ENCODE measurements at regions of chr17 and their contacts with region 1.

Region 1: DNA sequence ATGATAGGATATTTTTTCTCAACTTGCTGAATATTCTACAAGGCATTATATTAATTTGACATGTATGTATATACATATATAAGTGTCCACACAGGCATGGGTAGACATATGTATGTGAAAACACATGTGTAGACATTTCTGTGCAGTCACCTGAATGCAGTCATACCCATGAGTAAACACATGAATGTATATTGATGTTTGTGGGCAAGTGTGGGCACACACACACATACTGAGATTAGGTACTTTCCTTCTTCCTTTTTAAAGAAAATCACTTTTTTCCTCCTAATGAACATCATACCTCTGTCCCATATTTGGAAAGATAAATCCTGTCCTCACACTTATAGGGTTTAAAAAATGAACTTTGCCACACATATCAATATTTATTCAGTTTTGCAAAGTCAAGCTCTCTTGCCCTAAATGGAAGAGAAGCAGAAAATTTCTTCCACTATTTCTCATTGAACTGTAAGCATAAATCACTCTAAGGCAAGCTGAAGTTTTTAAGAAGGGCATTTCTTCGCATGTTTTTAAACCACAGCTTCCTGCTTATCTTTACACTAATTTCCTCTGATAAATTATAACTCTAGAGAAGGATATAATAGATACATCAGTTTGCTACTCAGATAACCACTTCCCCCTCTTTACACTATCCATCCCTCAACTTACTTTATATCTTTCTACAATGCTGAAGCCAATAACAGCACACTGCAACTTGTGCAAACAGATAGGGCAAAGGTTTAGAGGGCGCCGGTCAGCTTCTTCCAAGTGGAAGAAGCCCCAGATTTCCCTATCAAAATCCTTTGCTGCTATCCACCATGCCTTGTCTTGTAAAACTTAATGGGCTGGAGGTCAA is 49.6 kb upstream of the LRRC37A3 start:
- DNase-seq: peak; percentile 46
- H3K4me3 Mint-ChIP-seq: peak overlapping the region; percentile 7
- H3K27ac Mint-ChIP-seq: peak overlapping the region; percentile 78
- H3K4me1 Mint-ChIP-seq: peaks cover 69% of the 10 kb centered on the region
- H3K27me3 Mint-ChIP-seq: no peaks in the 10 kb centered on the region

Region 2: DNA sequence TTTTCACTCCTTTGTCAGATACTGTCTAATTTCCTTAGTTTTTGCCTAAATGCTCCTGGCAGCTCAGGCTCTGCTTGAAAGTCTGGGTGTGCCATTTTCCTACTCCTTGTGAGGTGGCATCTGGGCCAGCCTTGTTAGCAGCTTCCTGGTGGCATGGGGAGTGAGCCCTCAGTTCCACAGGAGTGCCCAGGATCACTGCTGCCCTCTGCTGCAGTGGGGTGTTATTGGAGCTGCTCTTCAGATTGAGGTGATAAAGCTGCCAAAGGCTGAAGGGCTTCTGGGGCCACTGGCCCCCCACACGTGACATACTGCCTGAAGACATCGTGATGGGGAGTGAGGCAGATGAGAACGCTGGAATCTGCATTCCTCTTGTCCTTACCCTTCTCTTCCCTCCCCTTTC is 434.7 kb before region 1 on chr17:
- CTCF ChIA-PET with region 1: no interaction called
- POLR2A ChIA-PET with region 1: no interaction called
- intact Hi-C with region 1: no loop called
- DNase-seq: peak; percentile 10
- H3K4me3 Mint-ChIP-seq: no peak overlapping the region
- H3K27ac Mint-ChIP-seq: peak overlapping the region; percentile 56
- H3K4me1 Mint-ChIP-seq: no peaks in the 10 kb centered on the region
- H3K27me3 Mint-ChIP-seq: no peaks in the 10 kb centered on the region

Region 3: GRCh38 chr17:64778240-64779097 is 190.4 kb before region 1 on chr17:
- CTCF ChIA-PET with region 1: no interaction called
- POLR2A ChIA-PET with region 1: no interaction called
- intact Hi-C with region 1: loop called (anchors 5 kb)
- DNase-seq: no peak
- H3K4me3 Mint-ChIP-seq: peak overlapping the region; percentile 5
- H3K27ac Mint-ChIP-seq: no peak overlapping the region
- H3K4me1 Mint-ChIP-seq: peaks cover 26% of the 10 kb centered on the region
- H3K27me3 Mint-ChIP-seq: peaks cover 6% of the 10 kb centered on the region

Region 4: GRCh38 chr17:64984851-64985521 is 16.1 kb after region 1 on chr17:
- CTCF ChIA-PET with region 1: interaction called, 5 read pairs
- POLR2A ChIA-PET with region 1: interaction called, 47 read pairs
- intact Hi-C with region 1: loop called (anchors 1 kb)
- DNase-seq: peak; percentile 70
- H3K4me3 Mint-ChIP-seq: peak overlapping the region; percentile 75
- H3K27ac Mint-ChIP-seq: peak overlapping the region; percentile 97
- H3K4me1 Mint-ChIP-seq: peaks cover 48% of the 10 kb centered on the region
- H3K27me3 Mint-ChIP-seq: no peaks in the 10 kb centered on the region

Region 5: DNA sequence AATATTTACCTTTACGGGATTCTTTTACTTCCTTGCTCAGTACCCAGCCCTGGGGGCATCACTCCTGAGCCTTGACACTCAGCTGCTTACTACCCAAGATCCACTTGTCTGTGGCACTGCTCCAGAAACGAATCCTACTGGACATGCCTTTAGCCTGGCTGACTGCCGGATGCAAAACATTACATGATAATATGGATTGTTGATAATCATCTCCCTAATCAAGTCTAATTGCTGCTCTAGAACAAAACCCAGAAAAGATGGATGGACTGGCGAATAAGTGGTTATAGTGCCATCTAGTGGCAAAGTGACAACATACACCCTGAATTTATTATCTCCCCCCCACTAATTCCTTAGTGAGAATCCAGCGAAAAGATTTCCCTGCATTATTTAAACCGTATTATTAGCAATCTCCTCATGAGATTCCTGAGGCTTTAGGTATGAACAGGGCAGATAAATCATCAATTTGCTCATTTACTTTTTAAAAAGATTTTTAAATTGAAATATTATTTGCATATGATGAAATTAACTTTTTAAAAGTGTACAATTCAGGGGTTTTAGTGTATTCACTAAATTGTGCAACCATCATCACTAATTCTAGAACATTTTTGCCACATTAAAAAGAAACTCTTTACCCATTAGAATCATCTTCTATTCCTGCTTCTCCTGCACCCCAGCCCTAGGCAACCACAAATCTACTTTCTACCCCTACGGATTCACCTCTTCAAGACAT is 229.9 kb after region 1 on chr17:
- CTCF ChIA-PET with region 1: interaction called, 6 read pairs
- POLR2A ChIA-PET with region 1: no interaction called
- intact Hi-C with region 1: loop called (anchors 2 kb)
- DNase-seq: no peak
- H3K4me3 Mint-ChIP-seq: no peak overlapping the region
- H3K27ac Mint-ChIP-seq: no peak overlapping the region
- H3K4me1 Mint-ChIP-seq: peaks cover 26% of the 10 kb centered on the region
- H3K27me3 Mint-ChIP-seq: peaks cover 2% of the 10 kb centered on the region